ENCODE measurements at regions of chr3 and their contacts with region 1.

Region 1: DNA sequence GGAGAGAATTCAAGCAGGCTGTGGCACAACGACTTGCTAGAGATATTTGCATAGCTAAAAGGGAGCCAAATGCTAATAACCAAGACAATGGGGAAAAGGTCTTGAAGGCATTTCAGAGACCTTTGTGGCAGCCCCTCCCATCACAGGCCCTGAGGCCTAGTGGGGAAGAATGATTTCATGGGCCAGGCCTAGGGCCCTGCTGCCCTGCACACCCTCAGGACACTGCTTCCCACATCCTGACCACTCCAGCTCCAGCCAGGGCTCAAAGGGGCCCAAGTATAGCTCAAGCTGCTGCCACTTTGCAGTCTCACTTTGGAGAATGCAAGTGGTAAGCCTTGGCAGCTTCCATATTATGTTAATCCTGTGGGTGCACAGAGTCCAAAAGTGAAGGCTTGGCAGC is 21.5 kb upstream of the PTPN23 start:
- DNase-seq: no peak
- H3K4me3 ChIP-seq: no peak overlapping the region
- H3K27ac ChIP-seq: no peak overlapping the region
- H3K4me1 ChIP-seq: no peaks in the 10 kb centered on the region
- H3K27me3 ChIP-seq: no peaks in the 10 kb centered on the region
- CTCF ChIP-seq: no peak
- POLR2A ChIP-seq: no peak

Region 2: DNA sequence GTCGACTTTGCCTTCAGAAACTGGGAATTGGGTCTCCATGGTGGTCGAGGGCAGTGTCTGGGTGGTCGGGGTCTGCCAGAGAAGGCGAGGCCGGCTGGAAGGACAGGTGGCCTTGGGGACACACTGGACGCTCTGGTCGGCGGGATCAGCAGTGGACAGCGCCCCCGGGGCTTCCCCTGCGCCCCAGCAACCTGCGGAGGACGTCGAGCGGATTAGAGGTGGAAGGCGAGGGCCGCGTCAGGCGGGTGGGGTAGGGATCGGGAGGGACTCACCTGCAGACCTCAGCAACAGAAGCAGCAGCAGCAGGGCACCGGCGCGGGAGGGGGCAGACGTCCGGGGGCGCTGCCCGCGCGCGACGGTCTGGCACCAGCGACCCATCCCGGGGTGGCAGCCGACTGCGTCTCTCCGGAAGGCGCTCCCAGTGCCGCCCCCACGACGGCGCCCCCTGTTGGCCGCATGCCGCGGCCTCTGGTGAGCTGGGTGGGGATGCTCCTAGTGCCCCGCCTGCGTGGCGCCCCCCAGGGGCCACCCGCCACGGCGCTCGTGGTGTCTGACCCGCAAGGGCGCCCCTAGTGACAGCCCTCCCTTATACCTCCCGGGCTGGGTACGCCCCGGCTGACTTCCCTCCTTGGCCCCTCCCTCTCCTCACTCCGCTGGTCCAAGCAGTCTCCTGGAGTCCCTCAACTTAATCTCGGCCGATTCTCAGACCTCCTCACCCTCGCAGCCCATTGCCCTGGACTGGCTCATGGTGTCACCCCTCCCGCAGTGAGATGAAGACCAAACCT is 641.7 kb before region 1 on chr3 and contains the start of gene PRSS50:
- intact Hi-C with region 1: loop called in 1 of 2 experiments (anchors 10 kb)
- DNase-seq: peak in 1 of 7 donors; percentile 10
- H3K4me3 ChIP-seq: no peak within 1 kb of the TSS
- H3K27ac ChIP-seq: no peak within 1 kb of the TSS
- H3K4me1 ChIP-seq: no peaks in the 10 kb centered on the region
- H3K27me3 ChIP-seq: peaks cover 9% of the 10 kb centered on the region
- CTCF ChIP-seq: no peak
- POLR2A ChIP-seq: no peak
- total RNA-seq, gene PRSS50: 0.07 to 0.30 (median 0.14) TPM in 5 of 9 donors, not detected in the others

Measured in adrenal gland (tissue), 19 donors.